H1 (cell line): ENCODE measurements at regions of chr19 and their contacts with region 1.

Region 1: GRCh38 chr19:47324502-47324901 is 7.5 kb upstream of the C5AR2 start:
- DNase-seq: no peak
- H3K4me3 ChIP-seq: no peak overlapping the region
- H3K27ac ChIP-seq: no peak overlapping the region
- H3K4me1 ChIP-seq: peaks cover 0 to 3% (median 0%) of the 10 kb centered on the region in 4 experiments; a peak in 1 of 7 replicates
- H3K27me3 ChIP-seq: no peaks in the 10 kb centered on the region; a peak in 2 of 7 replicates
- CTCF ChIP-seq: no peak
- EP300 ChIP-seq: no peak
- POLR2A ChIP-seq: no peak
- RAD21 ChIP-seq: no peak

Region 2: GRCh38 chr19:47305309-47305751 is 19.2 kb before region 1 on chr19:
- CTCF ChIA-PET with region 1: interaction called, 23 read pairs
- POLR2A ChIA-PET with region 1: no interaction called
- DNase-seq: peak; percentile 51 to 96
- H3K4me3 ChIP-seq: 0 out of 8 replicates have a peak overlapping the region, but pooled peaks of 1 of the 4 experiments have one; percentile 15
- H3K27ac ChIP-seq: no peak overlapping the region
- H3K4me1 ChIP-seq: peaks cover 0 to 2% (median 0%) of the 10 kb centered on the region in 4 experiments; a peak in 2 of 7 replicates
- H3K27me3 ChIP-seq: no peaks in the 10 kb centered on the region
- CTCF ChIP-seq: peak; percentile 79 to 98 (median 94)
- EP300 ChIP-seq: no peak
- POLR2A ChIP-seq: no peak
- RAD21 ChIP-seq: peak; percentile 43 to 49; a peak in 3 of 4 replicates